ENCODE measurements at regions of chr12 and their contacts with region 1.

Region 1: DNA sequence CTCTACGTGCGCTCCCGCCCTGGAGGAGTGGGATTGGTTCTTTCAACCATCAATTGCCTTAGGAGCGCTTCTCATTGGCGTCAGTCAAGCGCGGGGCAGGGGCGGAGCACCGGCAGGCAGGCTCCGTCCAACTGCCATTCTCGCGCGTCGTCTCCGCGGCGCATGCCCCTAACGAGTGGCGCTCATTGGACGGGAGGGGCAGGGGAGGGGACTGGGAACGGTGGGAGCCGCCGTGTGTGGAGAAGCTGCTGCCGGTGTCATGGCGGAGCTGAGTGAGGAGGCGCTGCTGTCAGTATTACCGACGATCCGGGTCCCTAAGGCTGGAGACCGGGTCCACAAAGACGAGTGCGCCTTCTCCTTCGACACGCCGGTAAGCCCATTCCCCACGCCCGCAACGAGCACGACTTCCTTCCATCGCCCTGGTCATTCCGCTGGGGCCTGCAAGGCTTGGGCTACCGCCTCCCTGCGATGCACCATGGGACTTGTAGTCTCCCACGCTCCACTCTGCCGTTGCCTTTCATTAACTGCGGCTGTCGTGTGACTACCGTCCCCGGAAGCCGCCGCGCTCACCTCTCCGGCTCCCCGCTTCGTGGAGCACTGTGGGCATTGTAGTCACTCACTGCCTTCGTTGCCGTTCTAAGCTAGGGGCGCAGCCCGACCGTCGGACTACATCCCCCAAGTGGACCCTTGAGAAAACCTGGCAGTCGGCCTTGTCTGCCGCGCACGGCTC is at the start of gene USP5:
- DNase-seq: peak; percentile 94 to 100 (median 97)
- ATAC-seq: peak; percentile 77
- H3K4me3 ChIP-seq: peak within 1 kb of the TSS; percentile 73
- H3K4me3 Mint-ChIP-seq: peak within 1 kb of the TSS; percentile 91
- H3K27ac ChIP-seq: peak within 1 kb of the TSS; percentile 89 to 95
- H3K27ac Mint-ChIP-seq: peak within 1 kb of the TSS; percentile 87
- H3K4me1 ChIP-seq: peaks cover 42% of the 10 kb centered on the region
- H3K4me1 Mint-ChIP-seq: peaks cover 29% of the 10 kb centered on the region
- H3K27me3 ChIP-seq: no peaks in the 10 kb centered on the region
- H3K27me3 Mint-ChIP-seq: no peaks in the 10 kb centered on the region
- CTCF ChIP-seq: no peak
- total RNA-seq, gene USP5: 31.8 to 33.4 TPM

Region 2: DNA sequence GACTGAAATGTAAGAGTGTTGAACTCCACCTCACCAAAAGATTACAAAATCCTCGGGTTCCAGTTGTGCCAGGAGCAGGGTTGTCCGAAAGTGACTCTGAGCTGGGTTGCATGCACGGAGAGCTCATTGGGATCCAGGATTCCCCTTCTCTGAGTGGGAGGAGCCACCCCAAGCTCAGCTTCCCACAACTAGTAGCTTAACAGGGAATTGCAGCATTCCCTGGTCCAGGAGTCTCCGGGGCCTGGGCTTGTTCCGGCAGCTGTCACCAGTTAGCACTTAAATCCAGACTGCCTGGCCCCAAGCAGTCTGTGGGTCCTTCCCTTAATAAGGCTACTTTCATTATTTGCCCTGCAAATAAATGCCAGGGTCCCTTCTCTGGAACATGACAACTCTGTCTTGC is 601.7 kb before region 1 on chr12:
- CTCF ChIA-PET with region 1: no interaction called
- POLR2A ChIA-PET with region 1: no interaction called
- intact Hi-C with region 1: no loop called
- DNase-seq: no peak
- ATAC-seq: no peak
- H3K4me3 ChIP-seq: no peak overlapping the region
- H3K4me3 Mint-ChIP-seq: no peak overlapping the region
- H3K27ac ChIP-seq: no peak overlapping the region
- H3K27ac Mint-ChIP-seq: no peak overlapping the region
- H3K4me1 ChIP-seq: no peaks in the 10 kb centered on the region
- H3K4me1 Mint-ChIP-seq: no peaks in the 10 kb centered on the region
- H3K27me3 ChIP-seq: peaks cover 0 to 6% of the 10 kb centered on the region in 2 experiments
- H3K27me3 Mint-ChIP-seq: peaks cover 13% of the 10 kb centered on the region
- CTCF ChIP-seq: no peak

Region 3: DNA sequence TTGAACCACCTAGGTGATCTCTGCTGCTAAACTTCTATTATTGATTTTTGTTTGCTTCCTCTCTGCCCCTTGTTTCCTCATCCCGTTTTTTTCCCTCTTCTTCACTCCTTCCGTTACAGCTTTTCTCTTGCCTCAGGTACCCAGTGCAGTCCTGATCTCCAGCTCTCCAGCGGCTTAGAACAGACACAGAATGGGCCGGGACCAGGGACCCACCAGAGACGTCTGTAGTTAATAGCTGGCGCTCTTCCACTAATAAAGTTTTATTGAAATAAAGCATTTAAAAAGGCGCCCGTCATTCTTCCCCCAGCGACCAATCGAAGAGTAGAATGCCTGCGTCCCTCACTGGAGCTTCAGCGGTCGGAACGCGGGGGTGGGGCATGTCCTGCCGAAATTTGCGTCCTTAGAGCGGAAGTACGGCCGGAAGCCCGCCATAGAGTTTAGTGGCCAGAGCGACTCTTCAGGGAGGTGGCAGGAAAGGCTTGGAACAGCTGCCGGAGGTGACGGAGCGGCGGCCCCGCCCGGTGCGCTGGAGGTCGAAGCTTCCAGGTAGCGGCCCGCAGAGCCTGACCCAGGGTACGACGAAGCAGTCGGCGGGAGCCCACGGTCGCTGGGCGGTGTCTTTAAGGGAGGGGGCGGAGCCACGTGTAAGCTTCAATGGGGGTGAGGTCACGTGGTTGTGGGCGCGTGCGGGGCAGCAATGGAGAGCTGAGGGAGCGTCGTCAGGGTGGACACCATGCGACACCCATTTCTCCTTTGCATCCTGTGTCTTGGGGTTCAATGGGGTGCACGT is 128.3 kb before region 1 on chr12 and contains the start of gene COPS7A:
- CTCF ChIA-PET with region 1: interaction called, 3 read pairs
- POLR2A ChIA-PET with region 1: interaction called, 27 read pairs
- intact Hi-C with region 1: no loop called
- DNase-seq: peak; percentile 81 to 99 (median 93)
- ATAC-seq: peak; percentile 84
- H3K4me3 ChIP-seq: peak within 1 kb of the TSS; percentile 59
- H3K4me3 Mint-ChIP-seq: peak within 1 kb of the TSS; percentile 87
- H3K27ac ChIP-seq: peak within 1 kb of the TSS; percentile 68 to 88
- H3K27ac Mint-ChIP-seq: peak within 1 kb of the TSS; percentile 83
- H3K4me1 ChIP-seq: peaks cover 18% of the 10 kb centered on the region
- H3K4me1 Mint-ChIP-seq: peaks cover 28% of the 10 kb centered on the region
- H3K27me3 ChIP-seq: no peaks in the 10 kb centered on the region
- H3K27me3 Mint-ChIP-seq: no peaks in the 10 kb centered on the region
- CTCF ChIP-seq: no peak
- total RNA-seq, gene COPS7A: 9.4 to 9.6 TPM

Region 4: GRCh38 chr12:6825398-6826124 is 26.5 kb before region 1 on chr12:
- CTCF ChIA-PET with region 1: no interaction called
- POLR2A ChIA-PET with region 1: interaction called, 28 read pairs
- intact Hi-C with region 1: no loop called
- DNase-seq: peak; percentile 71 to 90 (median 80)
- ATAC-seq: peak; percentile 65
- H3K4me3 ChIP-seq: no peak overlapping the region
- H3K4me3 Mint-ChIP-seq: peak overlapping the region; percentile 5
- H3K27ac ChIP-seq: no peak overlapping the region
- H3K27ac Mint-ChIP-seq: no peak overlapping the region
- H3K4me1 ChIP-seq: peaks cover 51% of the 10 kb centered on the region
- H3K4me1 Mint-ChIP-seq: peaks cover 26% of the 10 kb centered on the region
- H3K27me3 ChIP-seq: peaks cover 19 to 29% of the 10 kb centered on the region in 2 experiments
- H3K27me3 Mint-ChIP-seq: peaks cover 32% of the 10 kb centered on the region
- CTCF ChIP-seq: peak; percentile 94

Region 5: DNA sequence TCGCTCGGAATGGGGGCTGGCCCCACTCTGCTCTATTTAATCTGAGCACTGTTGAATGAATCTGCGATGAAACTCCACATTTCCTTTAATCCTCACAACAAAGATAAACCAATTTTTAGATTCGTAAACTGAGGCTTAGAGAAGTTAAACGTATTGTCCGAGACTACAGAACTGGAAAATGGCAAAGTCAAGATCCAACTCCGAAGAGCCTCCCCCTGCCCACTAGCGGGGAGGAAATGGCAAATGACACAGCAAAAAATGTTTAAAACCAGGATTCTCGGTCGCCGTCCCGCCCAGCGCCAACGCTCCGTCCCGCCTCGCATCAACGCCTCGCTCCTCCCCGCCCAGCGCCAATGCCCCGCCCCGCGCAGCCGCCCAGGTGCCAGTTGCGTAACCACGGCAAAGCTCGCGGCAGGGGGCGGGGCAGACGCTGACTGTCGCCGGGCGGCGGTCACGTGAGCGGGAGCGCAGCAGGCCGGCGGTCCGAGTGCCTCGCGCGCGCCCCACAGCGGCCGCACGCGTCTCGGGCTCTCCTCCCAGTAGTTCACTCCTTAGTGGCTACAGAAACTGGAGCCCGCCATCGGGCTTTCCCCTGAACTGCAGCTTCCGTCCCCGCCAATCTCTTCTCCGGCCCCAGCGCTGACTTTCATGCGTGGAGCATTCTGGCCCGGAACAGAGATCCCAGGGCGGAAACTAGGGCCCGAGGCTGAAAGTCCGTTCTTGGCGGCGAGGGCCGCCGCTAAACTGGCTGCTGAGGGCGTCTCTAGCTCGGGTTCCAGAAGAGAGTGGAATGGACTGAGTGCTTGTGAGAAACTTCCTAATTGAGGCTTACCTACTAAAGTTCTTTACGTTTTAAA is 38.9 kb after region 1 on chr12:
- CTCF ChIA-PET with region 1: interaction called, 33 read pairs
- POLR2A ChIA-PET with region 1: interaction called, 36 read pairs
- intact Hi-C with region 1: loop called in 1 of 2 experiments (anchors 5 kb)
- DNase-seq: peak; percentile 96 to 100 (median 99)
- ATAC-seq: peak; percentile 95
- H3K4me3 ChIP-seq: peak overlapping the region; percentile 65
- H3K4me3 Mint-ChIP-seq: peak overlapping the region; percentile 88
- H3K27ac ChIP-seq: peak overlapping the region; percentile 84 to 92
- H3K27ac Mint-ChIP-seq: peak overlapping the region; percentile 92
- H3K4me1 ChIP-seq: peaks cover 18% of the 10 kb centered on the region
- H3K4me1 Mint-ChIP-seq: peaks cover 13% of the 10 kb centered on the region
- H3K27me3 ChIP-seq: no peaks in the 10 kb centered on the region
- H3K27me3 Mint-ChIP-seq: no peaks in the 10 kb centered on the region
- CTCF ChIP-seq: peak; percentile 76

Region 6: DNA sequence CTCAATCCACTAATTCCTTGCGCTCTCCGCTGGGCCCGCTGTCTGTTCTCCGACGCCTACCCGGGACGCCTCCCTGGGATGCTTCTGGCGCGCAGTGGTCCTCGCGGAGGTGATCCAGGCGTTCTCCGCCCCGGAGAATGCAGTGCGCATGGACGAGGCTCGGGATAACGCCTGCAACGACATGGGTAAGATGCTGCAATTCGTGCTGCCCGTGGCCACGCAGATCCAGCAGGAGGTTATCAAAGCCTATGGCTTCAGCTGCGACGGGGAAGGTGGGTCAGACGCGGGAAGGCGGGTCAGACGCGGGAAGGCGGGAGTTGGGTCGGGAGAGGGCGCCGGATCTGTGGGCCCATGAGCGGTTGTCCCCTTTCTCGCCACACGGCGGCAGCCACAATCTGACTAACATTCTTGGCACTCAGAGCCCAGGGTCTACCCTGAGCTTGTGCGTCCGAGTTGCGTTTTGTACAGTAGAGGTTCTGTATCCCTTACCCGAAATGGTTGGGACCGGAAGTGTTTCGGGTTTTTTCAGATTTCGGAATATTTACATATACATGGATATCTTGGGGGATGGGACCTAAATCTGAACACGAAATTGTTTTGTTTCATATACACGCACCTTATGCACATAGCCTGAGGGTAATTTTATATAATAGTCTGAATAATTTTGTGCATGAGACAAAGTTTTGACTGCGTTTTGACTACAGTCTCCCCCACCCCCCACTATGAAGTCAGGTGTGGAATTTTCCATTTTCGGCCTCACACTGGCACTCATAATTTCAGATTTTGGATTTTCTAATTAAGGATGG is 92.5 kb after region 1 on chr12:
- CTCF ChIA-PET with region 1: interaction called, 7 read pairs
- POLR2A ChIA-PET with region 1: interaction called, 54 read pairs
- intact Hi-C with region 1: no loop called
- DNase-seq: peak; percentile 75 to 94 (median 84)
- ATAC-seq: peak; percentile 51
- H3K4me3 ChIP-seq: peak overlapping the region; percentile 65
- H3K4me3 Mint-ChIP-seq: peak overlapping the region; percentile 97
- H3K27ac ChIP-seq: peak overlapping the region; percentile 96 to 98
- H3K27ac Mint-ChIP-seq: peak overlapping the region; percentile 97
- H3K4me1 ChIP-seq: peaks cover 74% of the 10 kb centered on the region
- H3K4me1 Mint-ChIP-seq: peaks cover 73% of the 10 kb centered on the region
- H3K27me3 ChIP-seq: no peaks in the 10 kb centered on the region
- H3K27me3 Mint-ChIP-seq: no peaks in the 10 kb centered on the region
- CTCF ChIP-seq: peak; percentile 92

Measured in CD4-positive, alpha-beta T cell (primary cell).